PC-3 (cell line): ENCODE measurements at regions of chr1 and their contacts with region 1.

Region 1: DNA sequence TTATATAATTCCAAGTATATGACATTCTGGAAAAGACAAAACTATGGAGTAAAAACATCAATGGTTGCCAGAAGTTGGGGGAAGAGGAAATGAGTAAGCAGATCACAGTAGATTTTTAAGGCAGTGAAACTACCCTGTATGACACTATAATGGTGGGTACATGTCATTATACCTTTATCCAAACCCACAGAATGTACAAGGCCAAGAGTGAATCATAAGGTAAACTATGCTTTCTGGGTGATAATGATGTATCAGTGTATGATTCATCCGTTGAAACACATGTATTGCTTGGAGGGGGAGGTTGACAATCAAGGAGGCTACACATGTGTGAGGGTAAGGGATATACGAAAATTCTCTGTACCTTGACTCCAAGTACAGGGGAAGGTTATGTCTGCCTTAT is 862.7 kb downstream of the PLA2G4A start:
- DNase-seq: peak; percentile 88
- ATAC-seq: peak; percentile 87
- H3K4me3 ChIP-seq: no peak overlapping the region
- H3K27ac ChIP-seq: peak overlapping the region; percentile 72
- H3K4me1 ChIP-seq: peaks cover 49% of the 10 kb centered on the region
- H3K27me3 ChIP-seq: no peaks in the 10 kb centered on the region
- CTCF ChIP-seq: no peak

Region 2: DNA sequence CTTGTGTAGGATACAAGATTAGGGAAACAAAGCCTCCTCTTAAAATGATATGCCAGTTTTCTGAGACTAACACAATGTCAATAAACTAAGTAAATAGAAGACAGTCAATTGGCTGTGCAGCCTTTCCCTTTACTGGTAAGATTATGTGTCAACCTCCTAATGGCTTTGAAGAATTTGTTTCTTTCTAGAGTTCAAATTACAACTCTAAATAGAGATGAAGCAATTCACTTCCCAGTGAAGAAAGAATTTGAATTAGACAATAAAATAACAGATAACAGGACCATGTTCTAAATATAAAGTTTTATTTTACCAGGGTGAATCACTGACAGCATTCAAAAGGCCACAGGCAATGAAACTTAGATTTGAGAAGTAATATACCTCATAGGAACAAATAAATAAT is 182.4 kb before region 1 on chr1:
- CTCF ChIA-PET with region 1: no interaction called
- POLR2A ChIA-PET with region 1: no interaction called
- intact Hi-C with region 1: loop called (anchors 10 kb)
- DNase-seq: peak; percentile 73
- ATAC-seq: peak; percentile 90
- H3K4me3 ChIP-seq: no peak overlapping the region
- H3K27ac ChIP-seq: peak overlapping the region; percentile 62
- H3K4me1 ChIP-seq: peaks cover 19% of the 10 kb centered on the region
- H3K27me3 ChIP-seq: no peaks in the 10 kb centered on the region
- CTCF ChIP-seq: no peak

Region 3: GRCh38 chr1:187655175-187655574 is 36.3 kb before region 1 on chr1:
- CTCF ChIA-PET with region 1: no interaction called
- POLR2A ChIA-PET with region 1: no interaction called
- intact Hi-C with region 1: loop called (anchors 2 kb)
- DNase-seq: peak; percentile 62
- ATAC-seq: peak; percentile 70
- H3K4me3 ChIP-seq: no peak overlapping the region
- H3K27ac ChIP-seq: peak overlapping the region; percentile 19; the same call in 1 of the 2 replicates
- H3K4me1 ChIP-seq: peaks cover 5% of the 10 kb centered on the region; the same call in 1 of the 2 replicates
- H3K27me3 ChIP-seq: no peaks in the 10 kb centered on the region
- CTCF ChIP-seq: no peak